K562 (cell line): ENCODE measurements at regions of chr4 and their contacts with region 1.

Region 1: DNA sequence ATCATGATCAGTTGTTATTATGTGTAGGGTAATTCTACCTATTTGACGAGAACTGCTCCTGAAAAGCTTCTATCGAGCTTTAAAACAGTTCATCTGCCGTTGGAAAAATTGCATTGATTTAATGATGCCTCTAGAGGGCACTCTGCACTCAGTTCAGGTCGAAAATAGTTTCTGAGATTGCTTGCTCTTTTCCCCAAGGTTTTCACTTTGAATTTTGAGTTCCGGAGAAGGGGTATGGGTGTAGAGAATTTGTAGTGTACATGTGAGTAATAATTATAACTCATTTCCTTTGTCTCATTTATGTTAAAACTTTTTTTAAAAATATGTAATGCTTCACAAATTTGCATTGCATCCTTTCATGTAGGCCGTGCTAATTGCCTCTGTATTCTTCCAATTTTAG is 28.4 kb upstream of the TNIP3 start:
- DNase-seq: peak in 2 of 4 experiments; percentile 17 to 39
- ATAC-seq: peak; percentile 41; the same call in 1 of the 3 replicates
- H3K4me3 ChIP-seq: no peak overlapping the region
- H3K27ac ChIP-seq: no peak overlapping the region
- H3K4me1 ChIP-seq: no peaks in the 10 kb centered on the region
- H3K27me3 ChIP-seq: no peaks in the 10 kb centered on the region
- CTCF ChIP-seq: peak; percentile 46 to 72 (median 66); a peak in 5 of 6 replicates
- EP300 ChIP-seq: no peak
- POLR2A ChIP-seq: no peak
- RAD21 ChIP-seq: peak; percentile 37 to 51; a peak in 3 of 4 replicates

Region 2: GRCh38 chr4:121252224-121252806 is 59.8 kb after region 1 on chr4:
- CTCF ChIA-PET with region 1: interaction called, 7 read pairs
- POLR2A ChIA-PET with region 1: no interaction called
- in situ Hi-C with region 1: no loop called
- intact Hi-C with region 1: loop called (anchors 2 kb)
- DNase-seq: peak; percentile 67 to 74 (median 69)
- ATAC-seq: peak; percentile 93
- H3K4me3 ChIP-seq: no peak overlapping the region
- H3K27ac ChIP-seq: no peak overlapping the region
- H3K4me1 ChIP-seq: no peaks in the 10 kb centered on the region
- H3K27me3 ChIP-seq: no peaks in the 10 kb centered on the region
- CTCF ChIP-seq: peak; percentile 68 to 71 (median 69)
- EP300 ChIP-seq: no peak
- POLR2A ChIP-seq: no peak
- RAD21 ChIP-seq: peak; percentile 44 to 54

Region 3: GRCh38 chr4:121307445-121308327 is 115.2 kb after region 1 on chr4:
- CTCF ChIA-PET with region 1: interaction called, 5 read pairs
- POLR2A ChIA-PET with region 1: no interaction called
- in situ Hi-C with region 1: no loop called
- intact Hi-C with region 1: loop called (anchors 2 kb)
- DNase-seq: peak; percentile 25 to 56 (median 39)
- ATAC-seq: peak; percentile 71
- H3K4me3 ChIP-seq: no peak overlapping the region
- H3K27ac ChIP-seq: no peak overlapping the region
- H3K4me1 ChIP-seq: no peaks in the 10 kb centered on the region
- H3K27me3 ChIP-seq: no peaks in the 10 kb centered on the region
- CTCF ChIP-seq: peak; percentile 61 to 65 (median 64); a peak in 5 of 6 replicates
- EP300 ChIP-seq: no peak
- POLR2A ChIP-seq: no peak
- RAD21 ChIP-seq: peak; percentile 9 to 43; a peak in 2 of 4 replicates

Region 4: DNA sequence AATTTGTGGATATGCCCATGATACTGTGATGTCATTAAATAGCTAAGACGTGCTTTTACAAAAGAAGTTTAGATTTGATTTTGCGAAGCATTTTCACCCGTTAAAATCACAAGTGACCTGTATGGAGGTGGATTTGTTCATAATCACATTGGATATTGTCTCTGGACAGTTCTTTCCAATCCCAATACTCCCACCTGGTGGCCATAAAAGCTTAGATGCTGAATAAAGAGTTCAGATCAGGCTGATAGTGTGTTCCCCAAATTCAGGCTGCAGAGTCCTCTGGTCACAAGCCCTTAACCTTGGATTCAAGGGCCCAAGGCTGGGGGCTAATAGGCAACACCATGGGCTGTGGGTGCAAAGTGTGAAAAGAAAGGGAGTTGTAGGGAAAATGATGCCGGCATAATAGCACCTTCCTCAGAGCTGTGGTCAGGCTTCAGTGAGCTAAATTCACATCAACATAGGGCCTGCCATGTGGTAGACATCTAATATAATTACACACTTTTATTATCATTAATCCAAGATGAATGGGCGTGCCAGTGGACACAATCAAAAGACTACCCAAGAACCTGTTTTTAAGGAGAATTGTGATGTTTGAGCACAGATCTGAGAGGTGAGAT is 544.4 kb after region 1 on chr4:
- CTCF ChIA-PET with region 1: no interaction called
- POLR2A ChIA-PET with region 1: no interaction called
- in situ Hi-C with region 1: no loop called
- intact Hi-C with region 1: loop called (anchors 5 kb)
- DNase-seq: peak; percentile 31 to 68 (median 48)
- ATAC-seq: peak; percentile 88
- H3K4me3 ChIP-seq: no peak overlapping the region
- H3K27ac ChIP-seq: no peak overlapping the region
- H3K4me1 ChIP-seq: no peaks in the 10 kb centered on the region
- H3K27me3 ChIP-seq: peaks cover 7 to 19% of the 10 kb centered on the region in 2 experiments
- CTCF ChIP-seq: peak; percentile 58 to 75 (median 75)
- EP300 ChIP-seq: no peak
- POLR2A ChIP-seq: no peak
- RAD21 ChIP-seq: peak; percentile 65 to 78